Cardiac septum (tissue), 1 donor: ENCODE measurements at regions of chr5 and their contacts with region 1.

Region 1: DNA sequence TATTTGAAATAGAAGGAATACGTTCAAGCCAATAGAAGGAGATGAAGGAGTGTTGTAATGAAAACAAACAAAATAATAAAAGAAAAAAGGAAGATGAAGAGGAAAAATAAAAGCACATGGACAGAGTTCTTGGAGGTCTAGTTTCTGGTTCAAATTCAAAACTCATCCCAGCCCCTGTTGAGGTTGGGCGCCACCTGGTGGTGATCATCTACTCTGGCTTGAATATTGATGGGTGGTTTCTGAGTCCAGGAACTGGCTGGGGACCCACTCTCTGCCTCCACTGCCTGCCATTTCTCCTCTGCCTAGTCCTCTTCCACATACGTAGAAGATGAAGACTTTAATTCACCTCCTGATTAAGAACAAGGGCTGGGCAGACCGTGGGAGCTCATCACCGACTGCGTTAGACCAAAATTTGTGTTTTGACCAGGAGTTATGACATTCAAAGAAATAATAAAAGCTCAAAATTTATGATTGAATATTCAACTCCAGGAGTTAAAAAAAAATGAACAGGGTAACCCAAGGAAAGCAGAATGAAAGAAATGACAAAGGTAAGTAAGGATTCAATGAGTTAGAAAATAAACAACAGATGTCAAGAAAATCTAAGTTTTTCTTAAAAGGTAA is 99.0 kb upstream of the SLC1A3 start:
- DNase-seq: peak; percentile 86

Region 2: GRCh38 chr5:36414869-36415282 is 92.6 kb before region 1 on chr5:
- intact Hi-C with region 1: loop called (anchors 5 kb)
- DNase-seq: no peak